PC-9 (cell line): ENCODE measurements at regions of chr15 and their contacts with region 1.

Region 1: DNA sequence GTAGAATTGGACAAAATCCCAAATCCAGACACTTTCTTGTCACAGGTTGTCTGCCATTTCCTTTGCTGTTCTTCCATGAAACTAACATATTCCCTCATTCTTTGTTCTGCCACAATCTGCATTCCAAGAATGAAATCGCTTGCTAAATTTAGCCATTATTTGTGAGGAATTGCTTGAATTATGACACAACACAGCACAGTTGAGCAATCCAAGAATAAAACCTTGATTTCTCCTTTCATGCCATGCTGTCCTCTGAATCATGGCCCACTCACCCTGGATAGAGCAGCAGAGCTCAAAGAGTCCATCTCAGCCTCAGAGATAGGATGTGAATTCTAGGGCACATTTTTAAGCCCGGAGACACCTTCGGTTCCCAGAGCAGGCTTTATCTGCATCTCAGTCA is 35.2 kb upstream of the GREM1 start:
- DNase-seq: no peak
- H3K4me3 ChIP-seq: no peak overlapping the region
- H3K27ac ChIP-seq: no peak overlapping the region
- H3K4me1 ChIP-seq: peaks cover 9% of the 10 kb centered on the region; the same call in 1 of the 2 replicates
- H3K27me3 ChIP-seq: no peaks in the 10 kb centered on the region
- CTCF ChIP-seq: no peak

Region 2: DNA sequence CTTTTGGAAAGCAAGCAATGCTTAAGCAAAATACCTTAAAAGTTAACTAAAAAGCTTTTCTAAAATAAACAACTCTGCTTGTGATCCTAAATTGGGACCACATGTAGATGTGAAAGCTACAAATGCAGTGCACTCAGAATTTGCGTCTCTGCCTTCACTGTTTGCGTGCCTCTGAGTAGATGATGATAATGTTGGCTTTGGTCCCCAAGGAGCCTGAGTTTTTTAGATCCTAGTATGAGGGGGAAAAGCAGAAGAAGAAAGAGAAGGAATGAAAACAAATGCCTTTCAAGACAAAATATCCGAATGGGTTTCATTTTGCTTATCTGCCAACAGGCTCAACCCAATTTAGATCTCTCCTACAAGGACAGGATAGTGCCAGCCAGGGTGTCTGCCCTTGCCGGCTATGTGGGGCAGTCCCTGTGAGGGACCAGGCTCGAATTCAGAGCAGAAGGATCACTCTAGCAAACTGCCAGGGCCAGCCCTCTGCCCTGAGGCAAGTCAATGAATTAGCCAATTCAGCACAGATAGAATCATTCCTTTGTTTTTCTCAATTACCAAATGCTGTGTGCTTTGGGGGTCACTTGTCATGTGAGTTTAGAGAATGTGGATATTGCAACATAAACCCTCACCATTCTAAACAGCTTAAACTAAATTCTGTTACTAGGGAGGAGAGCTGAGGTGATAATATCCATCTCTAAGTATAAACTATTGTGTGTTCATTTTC is 12.5 kb before region 1 on chr15:
- CTCF ChIA-PET with region 1: no interaction called
- POLR2A ChIA-PET with region 1: no interaction called
- intact Hi-C with region 1: no loop called
- DNase-seq: peak; percentile 41 to 62
- H3K4me3 ChIP-seq: no peak overlapping the region
- H3K27ac ChIP-seq: no peak overlapping the region
- H3K4me1 ChIP-seq: peaks cover 14% of the 10 kb centered on the region
- H3K27me3 ChIP-seq: no peaks in the 10 kb centered on the region
- CTCF ChIP-seq: no peak

Region 3: GRCh38 chr15:32979710-32980109 is 297.1 kb after region 1 on chr15:
- CTCF ChIA-PET with region 1: no interaction called
- POLR2A ChIA-PET with region 1: interaction called, 52 read pairs
- intact Hi-C with region 1: no loop called
- DNase-seq: no peak
- H3K4me3 ChIP-seq: no peak overlapping the region
- H3K27ac ChIP-seq: no peak overlapping the region
- H3K4me1 ChIP-seq: no peaks in the 10 kb centered on the region
- H3K27me3 ChIP-seq: no peaks in the 10 kb centered on the region
- CTCF ChIP-seq: no peak